CD14-positive monocyte (primary cell): ENCODE measurements at regions of chr2 and their contacts with region 1.

Region 1: DNA sequence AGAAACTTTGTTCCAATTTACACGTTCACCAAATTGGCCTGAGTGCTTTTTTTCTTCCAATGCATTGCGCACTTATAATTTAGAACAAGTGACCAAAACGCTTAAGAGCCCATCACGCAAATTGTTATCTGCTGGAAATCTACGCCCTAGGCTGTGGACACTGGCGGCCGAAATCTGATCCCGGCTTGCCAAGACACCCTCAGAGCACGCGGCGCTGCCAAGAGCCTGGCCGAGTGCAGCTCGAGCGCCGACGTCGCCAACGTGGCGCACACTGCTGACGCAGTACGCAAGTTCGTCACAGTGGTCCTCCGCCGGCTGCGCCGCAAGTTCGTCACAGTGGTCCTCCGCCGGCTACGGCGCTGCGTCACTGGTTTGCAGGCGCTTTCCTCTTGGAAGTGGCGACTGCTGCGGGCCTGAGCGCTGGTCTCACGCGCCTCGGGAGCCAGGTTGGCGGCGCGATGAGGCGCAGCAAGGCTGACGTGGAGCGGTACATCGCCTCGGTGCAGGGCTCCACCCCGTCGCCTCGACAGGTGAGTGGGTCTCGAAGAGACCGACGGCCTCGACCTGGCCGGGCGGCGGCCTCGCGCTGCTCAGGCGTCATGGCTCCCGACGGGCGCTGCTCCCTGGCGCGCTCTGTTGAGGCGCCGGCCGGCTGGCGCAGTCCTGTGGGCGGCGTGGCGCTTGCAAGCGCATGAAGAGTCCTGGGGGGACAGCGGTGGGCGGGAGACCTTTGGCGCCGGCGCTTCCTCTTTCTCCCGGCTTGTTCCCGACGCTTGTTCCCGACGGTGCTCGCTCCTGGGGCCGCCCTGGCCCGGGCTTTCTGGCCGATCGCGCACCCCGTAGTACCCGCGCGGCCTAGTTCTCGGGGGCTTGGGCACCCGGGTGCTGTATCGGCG is at the start of gene RANBP2:
- DNase-seq: peak; percentile 96 to 97 (median 97)
- H3K4me3 ChIP-seq: peak within 1 kb of the TSS; percentile 54 to 83 (median 68)
- H3K4me3 Mint-ChIP-seq: peak within 1 kb of the TSS; percentile 85 to 89
- H3K27ac ChIP-seq: peak within 1 kb of the TSS; percentile 88 to 95
- H3K27ac Mint-ChIP-seq: peak within 1 kb of the TSS; percentile 95 to 97 (median 95)
- H3K4me1 ChIP-seq: peaks cover 9 to 13% of the 10 kb centered on the region in 2 donors
- H3K4me1 Mint-ChIP-seq: peaks cover 18% of the 10 kb centered on the region
- H3K27me3 ChIP-seq: no peaks in the 10 kb centered on the region
- H3K27me3 Mint-ChIP-seq: no peaks in the 10 kb centered on the region
- CTCF ChIP-seq: no peak
- polyA plus RNA-seq, gene RANBP2: 6.8 to 7.3 (median 7.0) TPM

Region 2: GRCh38 chr2:108607706-108608301 is 111.6 kb before region 1 on chr2:
- intact Hi-C with region 1: loop called in 1 of 2 experiments (anchors 10 kb)
- DNase-seq: peak in 1 of 3 donors; percentile 36
- H3K4me3 ChIP-seq: no peak overlapping the region
- H3K4me3 Mint-ChIP-seq: no peak overlapping the region
- H3K27ac ChIP-seq: no peak overlapping the region
- H3K27ac Mint-ChIP-seq: peak overlapping the region in 1 of 7 donors; percentile 15
- H3K4me1 ChIP-seq: no peaks in the 10 kb centered on the region
- H3K4me1 Mint-ChIP-seq: peaks cover 35% of the 10 kb centered on the region
- H3K27me3 ChIP-seq: no peaks in the 10 kb centered on the region
- H3K27me3 Mint-ChIP-seq: no peaks in the 10 kb centered on the region
- CTCF ChIP-seq: peak; percentile 68

Region 3: DNA sequence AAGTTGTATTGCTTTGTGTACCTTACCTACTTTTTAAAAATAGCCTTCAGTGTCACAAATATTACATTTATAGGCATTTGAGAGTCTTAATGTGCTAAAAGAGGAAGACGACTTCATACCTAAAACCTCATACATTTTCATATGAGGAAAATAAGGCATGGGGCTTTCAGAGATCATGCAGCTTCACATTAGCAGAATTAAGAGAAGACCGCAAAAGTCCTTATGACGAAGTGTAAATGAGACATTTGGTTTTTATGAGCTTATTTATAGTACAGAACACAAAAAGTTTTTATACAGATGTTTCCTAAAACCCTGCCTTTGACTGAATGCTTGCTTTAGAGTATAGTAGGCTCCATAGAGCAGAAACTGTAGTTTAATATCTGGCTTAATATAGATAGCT is 57.1 kb after region 1 on chr2:
- intact Hi-C with region 1: no loop called
- DNase-seq: no peak
- H3K4me3 ChIP-seq: no peak overlapping the region
- H3K4me3 Mint-ChIP-seq: no peak overlapping the region
- H3K27ac ChIP-seq: no peak overlapping the region
- H3K27ac Mint-ChIP-seq: no peak overlapping the region
- H3K4me1 ChIP-seq: no peaks in the 10 kb centered on the region
- H3K4me1 Mint-ChIP-seq: no peaks in the 10 kb centered on the region
- H3K27me3 ChIP-seq: no peaks in the 10 kb centered on the region
- H3K27me3 Mint-ChIP-seq: no peaks in the 10 kb centered on the region
- CTCF ChIP-seq: no peak